Colonic mucosa (tissue), 4 donors: ENCODE measurements at regions of chr1 and their contacts with region 1.

Region 1: GRCh38 chr1:78237364-78237916 is 191.7 kb downstream of the GIPC2 start:
- DNase-seq: peak; percentile 81
- H3K4me3 ChIP-seq: no peak overlapping the region
- H3K27ac ChIP-seq: peak overlapping the region; percentile 25
- H3K4me1 ChIP-seq: no peaks in the 10 kb centered on the region
- H3K27me3 ChIP-seq: no peaks in the 10 kb centered on the region
- CTCF ChIP-seq: no peak

Region 2: GRCh38 chr1:78333502-78333901 is 96.1 kb after region 1 on chr1:
- intact Hi-C with region 1: loop called (anchors 10 kb)
- DNase-seq: no peak
- H3K4me3 ChIP-seq: no peak overlapping the region
- H3K27ac ChIP-seq: no peak overlapping the region
- H3K4me1 ChIP-seq: no peaks in the 10 kb centered on the region
- H3K27me3 ChIP-seq: no peaks in the 10 kb centered on the region
- CTCF ChIP-seq: peak; percentile 55

Region 3: GRCh38 chr1:78497201-78497600 is 259.8 kb after region 1 on chr1:
- intact Hi-C with region 1: no loop called
- DNase-seq: no peak
- H3K4me3 ChIP-seq: no peak overlapping the region
- H3K27ac ChIP-seq: no peak overlapping the region
- H3K4me1 ChIP-seq: no peaks in the 10 kb centered on the region
- H3K27me3 ChIP-seq: no peaks in the 10 kb centered on the region
- CTCF ChIP-seq: no peak